MCF 10A (cell line): ENCODE measurements at regions of chr14 and their contacts with region 1.

Region 1: DNA sequence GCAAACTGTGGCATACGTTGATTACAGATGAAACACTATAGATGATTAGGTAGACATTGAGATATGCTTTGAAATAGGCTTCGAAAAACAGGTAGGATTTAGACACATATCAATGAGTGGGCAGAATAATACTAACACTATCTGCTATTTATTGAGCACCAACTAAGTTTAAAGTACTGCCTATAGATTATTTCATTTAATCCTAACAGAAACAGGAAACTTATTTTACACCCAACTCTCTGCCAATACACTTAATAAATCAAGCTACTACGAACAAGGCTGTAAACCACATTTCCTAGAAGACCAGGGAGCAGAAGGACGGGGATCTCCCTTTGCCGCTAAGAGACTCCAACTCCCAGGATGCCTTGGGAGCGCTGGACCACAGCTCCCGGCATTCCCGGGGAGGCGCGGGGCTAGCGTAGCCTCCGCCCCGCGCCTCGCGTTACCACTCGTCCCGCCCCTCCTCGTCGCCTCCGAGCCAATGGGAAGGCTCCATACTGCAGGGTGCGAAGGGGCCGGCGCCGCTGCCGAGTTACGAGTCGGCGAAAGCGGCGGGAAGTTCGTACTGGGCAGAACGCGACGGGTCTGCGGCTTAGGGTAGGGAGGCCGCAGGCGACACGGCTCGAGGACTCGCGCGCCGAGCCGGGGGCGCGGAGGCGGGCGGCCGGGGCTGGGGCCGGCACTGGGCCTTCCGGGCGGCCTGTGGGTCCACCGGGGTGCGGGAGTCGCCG is at the start of gene VRK1:
- DNase-seq: peak; percentile 97
- H3K4me3 Mint-ChIP-seq: peak within 1 kb of the TSS; percentile 85
- H3K27ac Mint-ChIP-seq: peak within 1 kb of the TSS; percentile 85
- H3K4me1 Mint-ChIP-seq: peaks cover 23% of the 10 kb centered on the region
- H3K27me3 Mint-ChIP-seq: no peaks in the 10 kb centered on the region
- CTCF ChIP-seq: no peak
- total RNA-seq, gene VRK1: 14.7 and 17.7 TPM in 2 replicates

Region 2: DNA sequence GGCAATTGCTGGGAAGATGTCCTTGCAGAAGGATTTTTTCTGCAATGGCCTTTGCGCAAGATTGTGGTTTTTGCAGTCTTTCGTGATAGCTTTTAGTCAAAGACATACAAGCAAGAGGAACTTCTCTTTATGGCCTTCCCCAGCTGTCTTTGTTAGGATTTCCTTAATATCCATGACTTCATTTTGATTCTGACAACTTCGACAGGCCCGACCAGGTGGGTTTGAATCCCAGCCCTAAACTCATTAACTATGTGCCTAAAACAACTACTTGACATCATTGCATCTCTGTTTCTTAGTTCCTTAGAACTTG is 13.1 kb before region 1 on chr14:
- CTCF ChIA-PET with region 1: interaction called, 8 read pairs
- POLR2A ChIA-PET with region 1: interaction called, 35 read pairs
- intact Hi-C with region 1: loop called (anchors 1 kb)
- DNase-seq: peak; percentile 72
- H3K4me3 Mint-ChIP-seq: peak overlapping the region; percentile 66
- H3K27ac Mint-ChIP-seq: peak overlapping the region; percentile 77
- H3K4me1 Mint-ChIP-seq: peaks cover 18% of the 10 kb centered on the region
- H3K27me3 Mint-ChIP-seq: no peaks in the 10 kb centered on the region
- CTCF ChIP-seq: no peak

Region 3: GRCh38 chr14:96962337-96962736 is 165.3 kb after region 1 on chr14:
- CTCF ChIA-PET with region 1: no interaction called
- POLR2A ChIA-PET with region 1: no interaction called
- intact Hi-C with region 1: no loop called
- DNase-seq: no peak
- H3K4me3 Mint-ChIP-seq: no peak overlapping the region
- H3K27ac Mint-ChIP-seq: no peak overlapping the region
- H3K4me1 Mint-ChIP-seq: no peaks in the 10 kb centered on the region
- H3K27me3 Mint-ChIP-seq: no peaks in the 10 kb centered on the region
- CTCF ChIP-seq: no peak